ENCODE measurements at regions of chr14 and their contacts with region 1.

Region 1: GRCh38 chr14:20440882-20441281 is 4.9 kb upstream of the KLHL33 start:
- DNase-seq: peak in 9 of 10 donors; percentile 12 to 79 (median 47)
- ATAC-seq: peak; percentile 96 to 98
- H3K4me3 Mint-ChIP-seq: peak overlapping the region; percentile 70 to 87 (median 82)
- H3K27ac Mint-ChIP-seq: peak overlapping the region; percentile 88 to 98 (median 94)
- H3K4me1 Mint-ChIP-seq: peaks cover 22 to 44% (median 31%) of the 10 kb centered on the region in 4 donors
- H3K27me3 Mint-ChIP-seq: no peaks in the 10 kb centered on the region

Region 2: DNA sequence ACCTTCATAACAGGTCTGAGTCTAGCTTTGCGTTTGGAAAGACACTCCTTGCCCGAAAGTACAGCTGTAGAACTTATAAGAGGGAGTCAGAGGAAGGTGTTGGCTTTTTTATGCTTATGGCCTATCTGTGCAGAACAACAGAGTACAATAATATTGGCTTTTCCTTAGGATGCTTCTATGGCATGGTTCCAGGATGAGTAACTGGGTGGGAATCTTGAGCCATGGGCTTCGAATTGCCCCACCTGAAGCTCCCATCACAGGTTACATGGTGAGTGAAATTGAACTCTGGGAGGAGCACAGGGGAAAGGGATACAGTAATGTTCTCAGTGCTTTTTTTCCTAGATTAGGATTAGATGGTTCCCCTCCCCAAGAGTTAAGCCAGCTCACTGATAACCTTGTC is 84.5 kb before region 1 on chr14:
- POLR2A ChIA-PET with region 1: no interaction called
- DNase-seq: no peak
- ATAC-seq: no peak
- H3K4me3 Mint-ChIP-seq: no peak overlapping the region
- H3K27ac Mint-ChIP-seq: peak overlapping the region in 4 of 10 donors; percentile 5 to 88 (median 21)
- H3K4me1 Mint-ChIP-seq: peaks cover 0 to 10% (median under 1%) of the 10 kb centered on the region in 4 donors
- H3K27me3 Mint-ChIP-seq: no peaks in the 10 kb centered on the region

Region 3: DNA sequence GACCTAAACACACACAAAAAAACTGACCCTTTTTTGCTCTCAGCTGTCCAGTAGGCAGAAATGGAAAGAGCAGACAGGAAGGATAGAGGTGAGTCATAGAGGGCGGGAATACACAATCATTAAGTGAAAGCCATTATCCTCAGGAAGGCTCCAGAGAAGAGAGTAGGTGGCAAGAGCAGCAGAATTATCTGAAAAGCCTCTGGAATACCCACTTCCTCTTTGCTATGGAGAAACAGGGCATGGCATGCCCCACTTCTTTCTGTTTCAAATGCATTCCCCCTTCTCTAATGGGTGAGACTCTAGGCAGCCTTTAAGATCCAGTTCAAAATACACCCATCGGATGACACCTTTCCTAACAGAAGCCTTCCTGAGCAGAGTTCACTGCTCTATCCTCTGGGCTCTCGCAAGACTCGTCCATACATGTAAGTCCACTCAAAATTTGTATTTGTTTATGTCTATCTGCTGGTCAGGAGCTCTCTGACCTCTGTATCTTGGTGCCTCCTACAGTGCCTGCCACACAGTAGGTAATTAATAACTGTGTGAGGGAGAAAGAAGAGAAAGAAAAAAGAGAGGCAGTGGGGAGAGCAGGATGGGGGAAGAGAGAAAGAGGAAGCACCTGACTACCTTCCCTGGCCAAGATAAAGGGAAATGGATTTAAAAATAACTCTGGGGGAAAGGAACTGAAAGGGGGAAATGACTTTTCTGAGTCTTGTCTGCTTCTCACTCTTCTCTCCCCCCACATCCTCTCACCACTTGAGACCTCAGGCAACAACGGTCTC is 13.5 kb before region 1 on chr14:
- POLR2A ChIA-PET with region 1: interaction called, 12 read pairs
- DNase-seq: peak in 2 of 10 donors; percentile 21 to 32
- ATAC-seq: peak; percentile 38 to 62
- H3K4me3 Mint-ChIP-seq: peak overlapping the region; percentile 45 to 80 (median 79)
- H3K27ac Mint-ChIP-seq: peak overlapping the region; percentile 88 to 95 (median 93)
- H3K4me1 Mint-ChIP-seq: peaks cover 24 to 50% (median 46%) of the 10 kb centered on the region in 4 donors
- H3K27me3 Mint-ChIP-seq: no peaks in the 10 kb centered on the region

Region 4: DNA sequence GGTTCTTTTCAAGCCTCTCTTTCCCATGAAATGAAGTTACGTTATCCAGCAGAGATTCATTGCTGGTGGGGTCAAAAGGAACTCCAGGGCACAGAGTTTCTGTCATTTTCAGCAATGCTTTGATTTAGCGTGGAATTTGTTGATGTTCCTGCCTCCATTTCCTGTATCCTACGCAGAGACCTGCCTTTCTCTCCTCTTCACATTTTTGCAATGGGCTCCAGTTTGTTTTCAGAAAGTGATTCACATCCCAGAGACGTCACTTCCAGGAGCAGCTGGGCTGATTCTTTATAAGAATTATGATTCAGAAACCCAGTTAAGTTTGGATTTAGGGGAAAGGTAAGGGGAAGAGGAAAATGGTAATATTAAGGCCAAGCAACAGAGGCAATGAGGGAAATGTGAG is 76.0 kb after region 1 on chr14:
- POLR2A ChIA-PET with region 1: no interaction called
- DNase-seq: no peak
- ATAC-seq: no peak
- H3K4me3 Mint-ChIP-seq: no peak overlapping the region
- H3K27ac Mint-ChIP-seq: no peak overlapping the region
- H3K4me1 Mint-ChIP-seq: peaks cover 0 to 8% (median 2%) of the 10 kb centered on the region in 4 donors
- H3K27me3 Mint-ChIP-seq: peaks cover 0 to 2% (median 0%) of the 10 kb centered on the region in 5 donors